WTC11 (cell line): ENCODE measurements at regions of chr6 and their contacts with region 1.

Region 1: DNA sequence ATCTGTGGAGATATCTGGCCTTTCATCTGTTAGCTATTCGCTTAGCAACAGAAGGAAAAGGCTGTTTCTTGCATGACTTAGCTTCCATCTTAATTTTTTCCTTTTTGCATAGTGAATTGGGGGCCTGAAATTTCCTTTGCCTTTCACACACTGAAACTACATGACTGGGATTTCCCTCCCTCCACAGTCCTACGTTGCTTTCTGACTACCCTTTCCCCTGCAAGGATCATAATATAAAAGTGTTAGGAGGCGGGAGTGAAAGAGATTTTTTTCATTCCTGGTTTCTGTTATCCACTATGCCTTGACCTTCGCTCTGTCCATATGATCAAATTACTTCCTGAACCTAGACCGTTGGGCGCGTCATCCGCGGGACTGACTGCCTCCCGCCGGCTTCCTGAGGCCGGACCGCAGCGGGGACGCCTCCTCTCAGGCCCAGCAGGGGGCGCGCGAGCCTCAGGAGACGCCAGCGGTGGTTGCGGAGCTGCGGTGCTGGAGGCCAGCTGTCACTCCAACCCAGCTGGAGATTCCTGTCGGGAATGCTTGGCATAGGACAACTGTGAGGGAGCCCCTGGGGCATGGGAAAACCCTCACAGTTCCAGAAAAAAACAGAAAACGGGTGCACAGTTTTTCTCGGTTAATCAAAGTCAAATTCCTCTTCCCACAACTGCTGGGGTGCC is 55.6 kb downstream of the MEP1A start:
- DNase-seq: peak; percentile 93
- ATAC-seq: peak; percentile 95
- H3K4me3 Mint-ChIP-seq: peak overlapping the region; percentile 62
- H3K27ac Mint-ChIP-seq: no peak overlapping the region
- H3K4me1 Mint-ChIP-seq: peaks cover 24% of the 10 kb centered on the region
- H3K27me3 Mint-ChIP-seq: peaks cover 13% of the 10 kb centered on the region
- CTCF ChIP-seq: peak; percentile 87

Region 2: DNA sequence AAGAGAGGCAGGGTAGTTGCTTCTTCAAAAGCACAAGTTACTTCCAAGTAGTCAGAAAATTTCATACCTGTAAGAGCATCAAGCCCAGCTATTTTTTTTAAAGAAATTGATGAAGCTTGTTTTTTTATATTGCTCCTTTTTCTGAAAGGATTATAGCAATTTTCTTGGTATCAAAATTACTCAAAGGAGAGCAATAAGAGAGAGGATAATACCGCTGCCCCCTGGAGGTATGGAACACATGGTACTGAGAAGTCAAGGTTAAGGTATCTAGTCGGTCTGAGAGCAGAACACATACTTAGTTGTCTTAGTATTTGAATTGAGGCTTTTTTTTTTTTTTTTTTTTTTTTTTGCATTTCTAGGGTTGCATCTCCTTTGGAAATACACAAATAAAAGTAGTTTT is 13.6 kb after region 1 on chr6:
- CTCF ChIA-PET with region 1: interaction called, 14 read pairs
- POLR2A ChIA-PET with region 1: no interaction called
- DNase-seq: no peak
- ATAC-seq: peak; percentile 85
- H3K4me3 Mint-ChIP-seq: no peak overlapping the region
- H3K27ac Mint-ChIP-seq: no peak overlapping the region
- H3K4me1 Mint-ChIP-seq: peaks cover 24% of the 10 kb centered on the region
- H3K27me3 Mint-ChIP-seq: no peaks in the 10 kb centered on the region
- CTCF ChIP-seq: no peak

Region 3: DNA sequence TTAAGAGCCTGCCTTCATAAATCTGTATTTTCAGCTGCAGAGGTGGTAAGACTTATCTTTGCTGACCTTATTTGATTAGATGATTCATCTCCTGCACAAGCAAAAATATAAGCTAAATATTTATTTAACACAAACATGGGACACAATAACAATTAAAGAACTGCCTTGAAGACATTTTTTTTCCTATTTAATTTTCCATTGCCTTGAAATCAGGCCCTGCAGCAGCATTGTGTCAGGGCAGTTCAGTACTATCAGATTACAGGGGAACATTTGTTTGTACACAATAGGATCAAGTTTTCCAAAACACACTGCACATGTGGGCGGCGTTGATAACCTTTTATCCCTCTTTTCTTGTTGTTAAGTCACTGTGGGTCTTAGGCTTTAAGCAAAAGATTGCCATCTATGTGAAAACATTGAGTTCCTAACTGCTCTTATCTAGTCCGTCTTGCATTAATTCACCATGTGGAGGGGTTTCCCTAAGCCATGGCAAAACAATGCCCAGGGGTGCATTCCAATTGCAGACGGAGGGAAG is 65.5 kb after region 1 on chr6:
- CTCF ChIA-PET with region 1: no interaction called
- POLR2A ChIA-PET with region 1: no interaction called
- DNase-seq: no peak
- ATAC-seq: no peak
- H3K4me3 Mint-ChIP-seq: no peak overlapping the region
- H3K27ac Mint-ChIP-seq: no peak overlapping the region
- H3K4me1 Mint-ChIP-seq: peaks cover under 1% of the 10 kb centered on the region; the same call in 1 of the 2 replicates
- H3K27me3 Mint-ChIP-seq: no peaks in the 10 kb centered on the region
- CTCF ChIP-seq: no peak

Region 4: DNA sequence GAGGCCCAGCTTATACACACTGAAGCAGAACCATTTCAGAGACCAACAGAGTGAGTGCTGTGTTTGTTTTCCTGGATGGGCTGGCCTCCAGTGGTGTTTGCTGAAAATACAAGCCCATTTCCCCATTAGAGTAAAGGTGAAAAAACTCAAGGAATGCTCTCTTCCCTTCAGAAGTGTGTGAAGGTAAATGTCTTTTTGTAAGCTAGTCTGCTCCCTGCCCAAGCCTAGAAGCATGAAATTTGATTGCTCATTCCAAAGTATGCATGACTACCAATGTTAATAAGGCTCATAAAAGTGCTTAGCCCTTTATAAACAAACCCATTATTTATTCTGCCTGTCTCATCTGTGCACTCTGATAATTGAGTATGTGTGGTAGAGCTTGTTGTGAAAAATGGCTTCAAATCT is 134.2 kb after region 1 on chr6:
- CTCF ChIA-PET with region 1: interaction called, 29 read pairs
- POLR2A ChIA-PET with region 1: no interaction called
- DNase-seq: no peak
- ATAC-seq: peak; percentile 86
- H3K4me3 Mint-ChIP-seq: no peak overlapping the region
- H3K27ac Mint-ChIP-seq: no peak overlapping the region
- H3K4me1 Mint-ChIP-seq: peaks cover 7% of the 10 kb centered on the region
- H3K27me3 Mint-ChIP-seq: no peaks in the 10 kb centered on the region
- CTCF ChIP-seq: no peak